Activated B cell treated with CpG ODN at 0.5 μM for 24 hours (primary cell): ENCODE measurements at regions of chr9 and their contacts with region 1.

Region 1: GRCh38 chr9:72680593-72681282 is 159.3 kb downstream of the TMC1 start:
- DNase-seq: no peak
- ATAC-seq: no peak
- H3K4me3 Mint-ChIP-seq: no peak overlapping the region
- H3K27ac Mint-ChIP-seq: no peak overlapping the region
- H3K4me1 Mint-ChIP-seq: no peaks in the 10 kb centered on the region
- H3K27me3 Mint-ChIP-seq: peaks cover 2% of the 10 kb centered on the region
- CTCF ChIP-seq: no peak

Region 2: DNA sequence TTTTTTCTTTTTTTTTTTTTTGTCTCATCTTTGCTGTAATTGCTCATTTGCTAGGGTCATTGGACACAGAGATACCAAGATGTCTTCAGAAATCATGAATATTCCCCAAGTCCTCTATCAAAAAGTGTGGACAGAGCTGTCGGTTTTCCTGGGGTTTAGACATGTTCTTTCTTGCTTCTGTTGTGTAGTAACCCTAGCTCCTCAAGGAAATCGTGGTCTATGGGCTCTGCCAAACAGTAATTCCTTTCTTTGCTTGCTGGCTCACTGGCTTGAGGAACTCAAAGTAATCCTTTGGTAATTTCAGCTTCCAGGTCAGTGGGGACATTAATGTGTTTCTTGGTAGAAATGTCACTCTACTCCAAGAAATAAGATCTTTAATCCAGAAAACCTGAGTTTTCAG is 57.6 kb before region 1 on chr9:
- CTCF ChIA-PET with region 1: no interaction called
- POLR2A ChIA-PET with region 1: no interaction called
- intact Hi-C with region 1: loop called (anchors 10 kb)
- DNase-seq: no peak
- ATAC-seq: no peak
- H3K4me3 Mint-ChIP-seq: no peak overlapping the region
- H3K27ac Mint-ChIP-seq: no peak overlapping the region
- H3K4me1 Mint-ChIP-seq: no peaks in the 10 kb centered on the region
- H3K27me3 Mint-ChIP-seq: no peaks in the 10 kb centered on the region
- CTCF ChIP-seq: no peak

Region 3: DNA sequence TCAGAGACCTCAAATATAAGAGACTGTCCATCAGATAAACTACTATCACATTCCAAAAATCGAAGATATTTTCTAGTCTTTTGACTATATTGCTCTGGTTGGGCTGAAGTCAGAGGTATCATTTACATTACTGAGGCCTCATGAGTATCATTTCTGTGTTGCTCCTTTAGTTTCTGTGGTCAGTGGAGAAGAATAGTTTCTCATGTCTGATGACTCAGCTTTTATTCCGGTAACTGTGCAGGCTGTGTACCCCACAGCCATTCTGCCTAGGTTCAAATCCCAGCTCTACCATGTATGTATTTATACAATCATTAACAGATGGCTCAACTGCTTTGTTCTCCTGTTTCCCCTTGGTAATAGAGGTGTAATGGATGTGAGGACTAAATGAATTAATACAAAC is 92.8 kb after region 1 on chr9:
- CTCF ChIA-PET with region 1: no interaction called
- POLR2A ChIA-PET with region 1: no interaction called
- intact Hi-C with region 1: no loop called
- DNase-seq: no peak
- ATAC-seq: no peak
- H3K4me3 Mint-ChIP-seq: no peak overlapping the region
- H3K27ac Mint-ChIP-seq: no peak overlapping the region
- H3K4me1 Mint-ChIP-seq: no peaks in the 10 kb centered on the region
- H3K27me3 Mint-ChIP-seq: no peaks in the 10 kb centered on the region
- CTCF ChIP-seq: no peak